ENCODE measurements at regions of chr5 and their contacts with region 1.

Region 1: GRCh38 chr5:157328277-157328912 is 62.5 kb downstream of the CYFIP2 start:
- DNase-seq: peak; percentile 46
- H3K4me3 Mint-ChIP-seq: peak overlapping the region; percentile 0
- H3K27ac Mint-ChIP-seq: peak overlapping the region; percentile 83
- H3K4me1 Mint-ChIP-seq: peaks cover 49% of the 10 kb centered on the region
- H3K27me3 Mint-ChIP-seq: no peaks in the 10 kb centered on the region

Region 2: GRCh38 chr5:157342822-157343402 is 14.5 kb after region 1 on chr5:
- intact Hi-C with region 1: loop called (anchors 2 kb)
- DNase-seq: no peak
- H3K4me3 Mint-ChIP-seq: no peak overlapping the region
- H3K27ac Mint-ChIP-seq: no peak overlapping the region
- H3K4me1 Mint-ChIP-seq: peaks cover 29% of the 10 kb centered on the region
- H3K27me3 Mint-ChIP-seq: no peaks in the 10 kb centered on the region

Region 3: GRCh38 chr5:157362012-157362411 is 33.6 kb after region 1 on chr5:
- intact Hi-C with region 1: loop called (anchors 5 kb)
- DNase-seq: no peak
- H3K4me3 Mint-ChIP-seq: no peak overlapping the region
- H3K27ac Mint-ChIP-seq: peak overlapping the region; percentile 59
- H3K4me1 Mint-ChIP-seq: peaks cover 1% of the 10 kb centered on the region
- H3K27me3 Mint-ChIP-seq: no peaks in the 10 kb centered on the region

Region 4: DNA sequence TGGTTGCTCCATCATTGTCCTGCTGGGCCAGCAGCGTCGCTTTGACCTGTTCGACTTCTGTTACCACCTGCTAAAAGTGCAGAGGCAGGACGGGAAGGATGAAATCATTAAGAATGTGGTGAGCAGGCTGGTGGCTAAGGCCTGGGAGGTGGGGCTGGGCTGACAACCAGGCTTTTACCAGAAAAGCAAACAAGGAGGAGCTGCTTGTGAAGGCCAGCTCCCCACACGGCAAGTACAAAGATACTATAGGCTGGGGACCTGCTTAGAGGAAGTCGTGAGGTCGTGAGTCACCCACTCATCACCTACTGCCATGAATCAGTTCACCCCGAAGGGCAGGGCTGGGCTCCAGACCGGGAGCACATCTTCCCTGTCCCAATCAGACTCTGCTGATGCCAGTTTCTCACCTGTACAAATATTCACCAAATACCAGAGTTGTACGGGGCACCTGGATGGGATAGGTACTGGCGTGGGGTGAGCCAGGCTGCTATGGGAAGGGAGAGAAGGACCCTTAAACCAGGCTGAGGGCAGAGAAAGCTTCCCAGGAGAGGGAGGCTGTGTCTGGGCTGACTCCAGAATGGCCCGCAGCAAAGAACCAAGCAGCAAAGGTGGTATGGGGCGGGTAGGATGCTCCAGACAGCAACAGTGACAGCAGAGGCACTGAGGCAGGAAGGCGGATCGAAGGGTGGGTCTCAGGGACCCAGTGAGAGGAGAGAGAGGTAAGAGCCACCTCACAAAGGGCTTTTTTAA is 62.3 kb after region 1 on chr5:
- intact Hi-C with region 1: loop called (anchors 2 kb)
- DNase-seq: peak; percentile 47
- H3K4me3 Mint-ChIP-seq: no peak overlapping the region
- H3K27ac Mint-ChIP-seq: peak overlapping the region; percentile 90
- H3K4me1 Mint-ChIP-seq: peaks cover 21% of the 10 kb centered on the region
- H3K27me3 Mint-ChIP-seq: no peaks in the 10 kb centered on the region

Region 5: GRCh38 chr5:157431544-157432200 is 103.3 kb after region 1 on chr5:
- intact Hi-C with region 1: loop called (anchors 2 kb)
- DNase-seq: peak; percentile 7
- H3K4me3 Mint-ChIP-seq: no peak overlapping the region
- H3K27ac Mint-ChIP-seq: no peak overlapping the region
- H3K4me1 Mint-ChIP-seq: peaks cover 8% of the 10 kb centered on the region
- H3K27me3 Mint-ChIP-seq: peaks cover 22% of the 10 kb centered on the region

Region 6: DNA sequence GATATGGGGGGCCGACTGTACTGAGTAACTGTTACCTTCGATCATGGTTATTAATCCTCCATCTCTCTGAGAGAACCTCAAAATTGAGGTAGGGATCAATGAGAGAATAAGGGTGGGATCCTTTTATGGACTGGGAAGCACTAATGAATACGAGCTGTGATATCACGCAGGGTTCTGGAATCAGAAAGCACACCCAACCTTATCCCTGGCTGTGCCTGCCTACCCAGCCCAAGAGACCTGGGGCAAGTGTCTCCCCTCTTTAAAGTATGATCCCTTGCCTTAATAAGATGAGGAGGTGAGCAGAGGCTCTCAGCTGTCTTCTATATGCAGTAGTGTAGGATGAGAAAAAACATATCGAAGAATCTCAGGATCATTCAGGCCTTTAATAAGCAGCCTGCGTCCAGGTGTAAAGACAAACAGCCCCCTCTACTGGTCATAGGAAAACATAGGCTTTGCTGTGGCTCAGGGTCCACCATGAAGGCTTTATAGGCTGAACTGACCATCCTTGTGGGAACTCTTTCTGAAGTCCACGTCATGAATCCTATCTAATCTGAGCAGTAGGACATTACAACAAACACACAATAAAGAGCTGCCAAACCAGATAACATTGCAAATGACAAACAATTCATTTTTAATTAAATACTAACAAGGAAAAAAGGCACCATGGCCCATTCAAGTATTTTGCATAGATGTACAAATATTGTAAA is 148.5 kb after region 1 on chr5:
- intact Hi-C with region 1: loop called (anchors 1 kb)
- DNase-seq: no peak
- H3K4me3 Mint-ChIP-seq: no peak overlapping the region
- H3K27ac Mint-ChIP-seq: peak overlapping the region; percentile 48
- H3K4me1 Mint-ChIP-seq: peaks cover 65% of the 10 kb centered on the region
- H3K27me3 Mint-ChIP-seq: no peaks in the 10 kb centered on the region